ENCODE measurements at regions of chr1 and their contacts with region 1.

Region 1: DNA sequence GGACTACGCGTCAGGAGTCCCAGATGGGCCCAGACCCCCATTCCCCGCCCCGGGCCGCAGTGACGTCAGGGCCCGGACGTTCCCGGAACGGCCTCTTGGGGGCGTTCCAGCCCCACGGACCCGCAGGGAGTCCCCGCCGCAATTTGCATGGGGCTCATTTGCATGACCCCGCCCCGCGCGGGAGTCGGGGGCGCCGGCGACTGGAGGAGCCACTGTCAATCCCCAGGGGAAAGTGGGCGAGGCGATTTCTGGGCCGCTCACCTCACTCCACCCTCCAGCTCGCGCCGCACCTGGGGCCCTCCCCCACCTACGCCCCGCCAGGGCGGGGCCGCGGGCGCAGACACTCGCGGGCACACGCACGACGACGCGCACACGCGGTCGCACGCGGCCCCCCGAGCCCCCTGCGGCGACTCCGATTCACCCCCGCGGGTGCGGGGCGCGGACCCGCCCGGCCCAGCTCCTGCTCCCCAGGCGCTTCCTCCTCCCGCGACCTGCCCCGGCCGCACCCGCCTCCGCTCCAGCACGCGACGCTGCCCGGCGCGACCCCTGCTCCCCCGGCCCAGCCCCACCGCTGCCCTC is 13.2 kb downstream of the AGRN start:
- DNase-seq: peak; percentile 88 to 93 (median 92)
- H3K4me3 ChIP-seq: peak overlapping the region in 6 of 7 experiments; percentile 18 to 69 (median 50)
- H3K27ac ChIP-seq: no peak overlapping the region
- H3K4me1 ChIP-seq: peaks cover 0 to 21% (median 17%) of the 10 kb centered on the region in 4 experiments
- H3K27me3 ChIP-seq: peaks cover 0 to 70% (median 6%) of the 10 kb centered on the region in 5 experiments

Region 2: DNA sequence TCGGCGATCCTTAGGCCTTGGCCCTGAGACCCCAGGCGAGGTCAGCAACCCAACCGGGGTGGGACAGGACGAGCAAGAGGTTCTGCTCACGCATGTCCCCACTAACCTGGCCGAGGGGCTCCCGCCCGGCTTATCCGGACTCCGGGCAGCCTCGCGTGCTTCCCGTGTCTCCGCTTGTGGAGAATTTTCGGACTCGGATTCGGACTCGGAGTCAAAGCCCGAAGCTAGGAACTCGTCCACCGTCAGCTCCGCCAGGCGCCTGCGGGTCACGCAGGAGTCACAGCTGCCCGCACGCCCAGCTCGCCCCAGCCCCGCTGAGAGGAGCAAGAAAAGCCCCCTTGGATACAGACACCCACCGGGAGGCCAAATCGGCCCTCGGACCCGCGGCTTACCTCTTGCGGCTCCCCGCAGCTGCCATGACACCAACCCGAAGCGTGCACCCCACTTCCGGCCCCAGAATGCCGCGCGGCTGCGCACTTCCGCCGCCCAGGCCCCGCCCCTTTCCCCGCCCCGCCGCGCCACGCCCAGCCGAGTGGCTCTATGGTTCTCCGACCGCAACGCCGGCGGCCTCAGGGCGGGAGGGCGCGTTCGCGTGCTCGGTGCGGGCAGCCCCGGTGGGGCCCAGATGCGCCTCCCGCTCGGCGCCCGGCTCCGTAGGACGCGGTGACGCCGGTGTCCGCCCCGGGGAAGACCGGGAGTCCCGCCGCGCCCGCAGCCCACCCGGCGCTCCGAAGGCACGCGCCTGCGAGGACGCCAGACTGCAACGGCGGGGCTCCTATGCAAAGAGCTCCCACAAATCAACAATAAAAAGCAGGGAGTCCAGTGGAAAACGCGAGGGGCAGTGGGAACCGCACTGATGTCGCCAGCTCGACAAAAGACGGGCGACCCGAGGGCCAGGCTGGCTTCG is 74.0 kb before region 1 on chr1 and contains the start of gene NOC2L:
- CTCF ChIA-PET with region 1: no interaction called
- POLR2A ChIA-PET with region 1: no interaction called
- DNase-seq: peak; percentile 86 to 93 (median 92)
- H3K4me3 ChIP-seq: peak within 1 kb of the TSS; percentile 76 to 98 (median 89)
- H3K27ac ChIP-seq: peak within 1 kb of the TSS; percentile 61 to 85
- H3K4me1 ChIP-seq: peaks cover 0 to 49% (median 33%) of the 10 kb centered on the region in 4 experiments
- H3K27me3 ChIP-seq: peaks cover 0 to 22% (median 2%) of the 10 kb centered on the region in 5 experiments

Region 3: GRCh38 chr1:1050577-1051052 is 17.5 kb after region 1 on chr1:
- CTCF ChIA-PET with region 1: no interaction called
- POLR2A ChIA-PET with region 1: no interaction called
- DNase-seq: no peak
- H3K4me3 ChIP-seq: no peak overlapping the region
- H3K27ac ChIP-seq: no peak overlapping the region
- H3K4me1 ChIP-seq: no peaks in the 10 kb centered on the region
- H3K27me3 ChIP-seq: no peaks in the 10 kb centered on the region

Region 4: DNA sequence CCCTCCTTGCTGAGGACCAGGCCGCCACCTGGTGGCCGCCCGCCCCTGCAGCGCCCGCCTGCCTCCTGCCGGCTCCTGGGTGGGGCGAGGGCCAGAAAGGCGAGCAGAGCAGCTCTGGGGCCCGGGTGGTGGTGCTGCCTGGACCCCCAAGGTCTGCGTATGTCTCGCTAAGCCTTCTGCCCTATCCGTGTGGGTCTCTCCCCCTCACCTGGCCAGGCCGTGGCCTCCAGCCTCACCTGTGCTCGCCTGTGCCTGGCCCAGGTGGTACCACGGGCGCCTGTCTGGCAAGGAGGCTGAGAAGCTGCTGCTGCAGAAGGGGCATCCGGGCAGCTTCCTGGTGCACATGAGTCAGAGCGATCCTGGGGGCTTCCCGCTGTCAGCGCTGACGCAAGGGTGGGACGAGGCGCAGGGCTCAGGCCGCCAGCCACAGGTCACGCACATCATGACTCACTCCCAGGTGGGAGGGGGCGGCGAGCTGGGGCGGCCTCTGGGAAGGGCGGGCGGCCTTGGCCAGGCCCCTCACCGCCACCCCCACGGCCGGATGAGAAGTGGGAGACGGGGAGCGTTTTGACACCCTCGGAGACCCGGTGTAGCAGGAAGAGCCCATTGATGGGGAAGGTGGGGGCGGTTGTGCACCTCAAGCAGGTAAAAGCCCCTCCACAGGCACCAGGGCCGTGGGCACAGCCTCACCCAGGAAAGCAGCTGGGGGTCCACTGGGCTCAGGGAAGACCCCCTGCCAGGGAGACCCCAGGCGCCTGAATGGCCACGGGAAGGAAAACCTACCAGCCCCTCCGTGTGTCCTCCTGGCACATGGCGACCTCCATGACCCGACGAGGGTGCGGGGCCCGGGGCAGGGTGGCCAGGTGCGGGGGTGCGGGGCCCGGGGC is 31.1 kb after region 1 on chr1:
- CTCF ChIA-PET with region 1: interaction called, 26 read pairs
- POLR2A ChIA-PET with region 1: no interaction called
- DNase-seq: peak; percentile 97 to 99 (median 99)
- H3K4me3 ChIP-seq: peak overlapping the region in 3 of 7 experiments; percentile 46 to 66 (median 51)
- H3K27ac ChIP-seq: peak overlapping the region in 1 of 2 experiments; percentile 75
- H3K4me1 ChIP-seq: peaks cover 0 to 44% (median 42%) of the 10 kb centered on the region in 4 experiments
- H3K27me3 ChIP-seq: peaks cover 0 to 62% (median 19%) of the 10 kb centered on the region in 5 experiments

Measured in common myeloid progenitor, CD34-positive (primary cell).